Breast epithelium (tissue), 4 donors: ENCODE measurements at regions of chr1 and their contacts with region 1.

Region 1: GRCh38 chr1:85259118-85259911 is at the start of gene C1orf52:
- DNase-seq: peak; percentile 92 to 95
- H3K4me3 ChIP-seq: peak within 1 kb of the TSS; percentile 94 to 98 (median 97)
- H3K27ac ChIP-seq: peak within 1 kb of the TSS; percentile 88 to 93
- H3K4me1 ChIP-seq: peaks cover 0 to 10% of the 10 kb centered on the region in 2 donors
- H3K27me3 ChIP-seq: no peaks in the 10 kb centered on the region
- CTCF ChIP-seq: peak; percentile 98
- POLR2A ChIP-seq: peak; percentile 74
- total RNA-seq, gene C1orf52: 11.6 to 21.6 (median 15.0) TPM

Region 2: DNA sequence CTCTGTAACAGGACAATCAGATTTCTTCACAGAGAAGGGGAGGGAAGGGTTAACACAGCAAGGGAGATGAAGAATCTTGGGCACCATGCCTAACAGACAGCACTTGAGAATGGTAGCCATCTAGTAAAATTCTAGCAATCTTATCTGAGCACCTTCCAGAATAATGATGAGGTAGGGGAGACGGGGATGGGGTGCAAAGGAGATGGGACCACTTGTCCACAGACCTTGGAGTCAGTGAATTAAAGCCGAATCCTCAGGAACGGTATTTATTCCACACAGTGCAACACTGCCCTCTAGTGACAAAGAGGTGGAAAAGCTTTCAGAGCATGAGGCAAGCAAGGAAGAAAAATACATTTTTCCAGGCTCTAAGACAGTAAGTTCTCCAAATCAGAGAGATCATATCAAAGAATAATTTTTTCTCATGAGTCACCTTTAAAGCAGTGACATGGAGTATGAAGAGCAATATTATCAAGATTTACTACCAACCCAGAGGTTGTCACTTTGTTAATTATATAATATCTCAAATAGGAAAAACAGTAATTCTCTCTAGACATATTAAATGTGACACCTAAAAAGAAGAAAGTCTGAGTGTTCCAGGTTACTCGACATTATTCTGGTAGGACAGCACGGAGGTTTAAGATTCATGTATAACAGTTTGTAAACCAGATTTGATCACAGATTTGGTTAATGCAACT is 323.1 kb before region 1 on chr1:
- intact Hi-C with region 1: loop called (anchors 5 kb)
- DNase-seq: peak in 1 of 2 donors; percentile 24
- H3K4me3 ChIP-seq: no peak overlapping the region
- H3K27ac ChIP-seq: no peak overlapping the region
- H3K4me1 ChIP-seq: no peaks in the 10 kb centered on the region
- H3K27me3 ChIP-seq: no peaks in the 10 kb centered on the region
- CTCF ChIP-seq: peak; percentile 58 to 88 (median 78)
- POLR2A ChIP-seq: no peak